CD14-positive monocyte (primary cell): ENCODE measurements at regions of chr3 and their contacts with region 1.

Region 1: GRCh38 chr3:50436114-50436674 is 67.2 kb downstream of the CACNA2D2 start:
- DNase-seq: peak; percentile 49 to 64 (median 60)
- H3K4me3 ChIP-seq: no peak overlapping the region
- H3K4me3 Mint-ChIP-seq: no peak overlapping the region
- H3K27ac ChIP-seq: no peak overlapping the region
- H3K27ac Mint-ChIP-seq: no peak overlapping the region
- H3K4me1 ChIP-seq: peaks cover 7 to 13% of the 10 kb centered on the region in 2 donors
- H3K4me1 Mint-ChIP-seq: peaks cover 21% of the 10 kb centered on the region
- H3K27me3 ChIP-seq: no peaks in the 10 kb centered on the region
- H3K27me3 Mint-ChIP-seq: peaks cover 6 to 9% (median 6%) of the 10 kb centered on the region in 3 donors
- CTCF ChIP-seq: peak; percentile 96

Region 2: DNA sequence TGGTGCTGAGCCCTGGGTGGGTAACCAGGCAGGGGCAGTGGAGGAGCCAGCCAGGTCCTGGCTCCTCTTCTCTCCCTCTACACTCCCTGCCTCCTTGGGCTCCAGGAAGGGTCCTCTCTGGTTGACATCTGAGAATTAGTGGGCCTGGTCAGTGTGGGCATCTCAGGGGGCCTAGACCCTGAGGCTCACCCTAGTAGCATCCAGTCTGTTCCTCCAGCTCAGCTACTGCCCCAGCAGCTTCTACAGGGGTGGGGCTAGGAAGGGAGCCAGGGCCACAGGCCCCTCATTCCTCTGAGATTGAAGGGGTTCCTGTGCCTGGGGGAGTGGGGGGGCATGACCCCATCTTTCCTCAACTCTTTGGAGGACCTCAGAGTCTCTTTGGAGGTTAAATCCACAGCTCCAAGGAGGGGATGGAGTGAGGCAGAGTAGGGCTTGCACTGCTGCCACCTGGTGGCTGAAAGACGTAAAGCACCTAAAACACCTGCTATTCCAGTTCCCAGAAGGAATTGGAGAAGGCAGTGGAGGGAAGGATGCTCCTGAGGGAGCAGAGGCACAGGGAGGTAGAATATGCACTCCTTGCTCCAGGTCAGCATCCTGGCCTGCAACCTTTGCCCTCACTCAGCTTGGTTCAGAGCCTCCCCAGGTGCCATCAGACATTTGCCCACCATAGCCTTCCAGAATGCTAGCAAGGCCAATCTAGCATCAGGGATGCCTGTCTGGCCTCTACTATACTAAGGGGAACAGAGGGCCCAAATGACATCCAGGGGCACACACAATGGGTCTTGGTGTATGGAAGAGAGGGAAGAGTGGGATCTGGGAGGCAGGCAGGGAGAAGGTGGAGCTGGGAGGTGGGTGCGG is 106.2 kb after region 1 on chr3:
- intact Hi-C with region 1: loop called (anchors 1 to 5 kb)
- DNase-seq: peak; percentile 36 to 66 (median 57)
- H3K4me3 ChIP-seq: no peak overlapping the region
- H3K4me3 Mint-ChIP-seq: no peak overlapping the region
- H3K27ac ChIP-seq: no peak overlapping the region
- H3K27ac Mint-ChIP-seq: no peak overlapping the region
- H3K4me1 ChIP-seq: no peaks in the 10 kb centered on the region
- H3K4me1 Mint-ChIP-seq: no peaks in the 10 kb centered on the region
- H3K27me3 ChIP-seq: peaks cover 0 to 4% of the 10 kb centered on the region in 2 donors
- H3K27me3 Mint-ChIP-seq: peaks cover 15 to 16% (median 16%) of the 10 kb centered on the region in 3 donors
- CTCF ChIP-seq: peak; percentile 94